ENCODE measurements at regions of chr11 and their contacts with region 1.

Region 1: DNA sequence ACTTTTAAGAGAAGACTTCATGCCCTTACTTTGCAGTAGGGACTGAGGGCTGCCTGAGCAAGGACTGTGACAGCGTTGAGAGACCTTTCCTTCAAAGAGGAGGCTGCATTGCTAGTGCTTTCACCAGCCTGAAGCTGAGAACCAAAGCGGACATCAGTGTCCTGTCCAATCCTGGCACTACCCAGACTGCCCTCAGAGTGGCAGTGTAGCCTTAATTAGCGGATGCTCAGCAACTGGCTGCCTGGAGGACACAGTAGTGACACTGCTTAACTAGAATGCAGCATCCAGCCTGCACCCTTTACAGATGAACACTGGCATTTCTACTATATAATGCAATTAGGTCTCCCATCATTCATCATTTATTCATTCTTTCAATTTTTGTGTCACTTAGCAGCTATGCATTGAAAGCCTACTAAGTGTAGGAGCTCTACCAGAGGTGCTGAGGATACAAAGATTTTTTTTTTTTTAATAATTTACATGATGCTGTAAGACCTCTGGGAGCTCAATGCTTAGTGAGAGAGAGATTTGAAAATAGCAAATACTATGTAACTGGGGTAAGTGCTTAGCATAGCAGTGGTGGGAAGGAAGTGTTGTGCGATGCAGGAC is 36.9 kb upstream of the SLC36A4 start:
- DNase-seq: peak; percentile 81 to 82
- H3K4me3 ChIP-seq: no peak overlapping the region
- H3K27ac ChIP-seq: no peak overlapping the region
- H3K4me1 ChIP-seq: no peaks in the 10 kb centered on the region
- H3K27me3 ChIP-seq: no peaks in the 10 kb centered on the region
- CTCF ChIP-seq: peak; percentile 79 to 98 (median 92)
- POLR2A ChIP-seq: no peak

Region 2: DNA sequence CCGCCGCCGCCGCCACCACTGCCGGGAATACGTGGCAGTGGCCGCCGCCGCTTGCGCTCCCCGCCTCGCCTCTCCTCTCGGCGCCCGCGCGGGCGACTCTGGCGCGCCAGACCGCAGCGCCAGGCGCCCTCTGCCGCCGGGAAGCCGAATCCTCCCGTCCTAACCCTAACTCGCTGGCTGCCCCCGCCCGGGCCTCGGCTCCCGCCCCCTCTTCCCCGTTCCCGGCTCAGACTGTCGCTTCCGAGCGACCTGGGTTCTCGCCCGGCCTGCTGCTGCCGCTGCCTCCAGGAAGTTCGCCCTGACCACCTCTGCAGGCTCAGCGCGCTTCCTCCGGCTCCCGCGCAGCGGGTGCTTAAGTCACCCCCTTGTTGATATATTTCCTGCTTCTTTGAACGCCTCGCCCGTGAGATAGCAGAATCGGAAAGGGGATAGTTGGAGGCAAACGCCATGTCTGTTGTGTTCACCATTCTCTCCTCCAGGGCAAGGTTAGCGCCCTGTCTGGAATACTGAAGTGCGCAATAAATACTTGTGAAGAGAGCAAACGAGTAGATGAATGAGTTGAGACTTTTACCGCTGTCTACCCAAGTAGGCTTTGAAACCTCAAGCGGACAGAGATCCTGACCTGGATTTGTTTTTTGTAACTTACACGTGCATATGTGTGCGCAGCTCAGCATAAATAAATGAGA is 308.7 kb after region 1 on chr11 and contains the start of gene SMCO4:
- intact Hi-C with region 1: loop called (anchors 10 kb)
- DNase-seq: peak; percentile 82 to 84
- H3K4me3 ChIP-seq: peak within 1 kb of the TSS; percentile 62 to 81 (median 69)
- H3K27ac ChIP-seq: peak within 1 kb of the TSS; percentile 90 to 99 (median 97)
- H3K4me1 ChIP-seq: peaks cover 46 to 74% of the 10 kb centered on the region in 2 donors
- H3K27me3 ChIP-seq: no peaks in the 10 kb centered on the region
- CTCF ChIP-seq: peak; percentile 22 to 85 (median 51)
- POLR2A ChIP-seq: peak in 1 of 2 donors; percentile 76
- total RNA-seq, gene SMCO4: 38.6 to 135 (median 102) TPM

Region 3: GRCh38 chr11:93623179-93623578 is 388.5 kb after region 1 on chr11:
- intact Hi-C with region 1: loop called (anchors 10 kb)
- DNase-seq: no peak
- H3K4me3 ChIP-seq: no peak overlapping the region
- H3K27ac ChIP-seq: no peak overlapping the region
- H3K4me1 ChIP-seq: no peaks in the 10 kb centered on the region
- H3K27me3 ChIP-seq: no peaks in the 10 kb centered on the region
- CTCF ChIP-seq: no peak
- POLR2A ChIP-seq: no peak

Region 4: GRCh38 chr11:93652161-93652597 is 417.5 kb after region 1 on chr11:
- intact Hi-C with region 1: loop called (anchors 5 kb)
- DNase-seq: peak in 1 of 2 donors; percentile 9
- H3K4me3 ChIP-seq: no peak overlapping the region
- H3K27ac ChIP-seq: no peak overlapping the region
- H3K4me1 ChIP-seq: no peaks in the 10 kb centered on the region
- H3K27me3 ChIP-seq: no peaks in the 10 kb centered on the region
- CTCF ChIP-seq: peak; percentile 34 to 95 (median 60)
- POLR2A ChIP-seq: no peak

Measured in thyroid gland (tissue), 4 donors.